ENCODE measurements at regions of chr1 and their contacts with region 1.

Region 1: DNA sequence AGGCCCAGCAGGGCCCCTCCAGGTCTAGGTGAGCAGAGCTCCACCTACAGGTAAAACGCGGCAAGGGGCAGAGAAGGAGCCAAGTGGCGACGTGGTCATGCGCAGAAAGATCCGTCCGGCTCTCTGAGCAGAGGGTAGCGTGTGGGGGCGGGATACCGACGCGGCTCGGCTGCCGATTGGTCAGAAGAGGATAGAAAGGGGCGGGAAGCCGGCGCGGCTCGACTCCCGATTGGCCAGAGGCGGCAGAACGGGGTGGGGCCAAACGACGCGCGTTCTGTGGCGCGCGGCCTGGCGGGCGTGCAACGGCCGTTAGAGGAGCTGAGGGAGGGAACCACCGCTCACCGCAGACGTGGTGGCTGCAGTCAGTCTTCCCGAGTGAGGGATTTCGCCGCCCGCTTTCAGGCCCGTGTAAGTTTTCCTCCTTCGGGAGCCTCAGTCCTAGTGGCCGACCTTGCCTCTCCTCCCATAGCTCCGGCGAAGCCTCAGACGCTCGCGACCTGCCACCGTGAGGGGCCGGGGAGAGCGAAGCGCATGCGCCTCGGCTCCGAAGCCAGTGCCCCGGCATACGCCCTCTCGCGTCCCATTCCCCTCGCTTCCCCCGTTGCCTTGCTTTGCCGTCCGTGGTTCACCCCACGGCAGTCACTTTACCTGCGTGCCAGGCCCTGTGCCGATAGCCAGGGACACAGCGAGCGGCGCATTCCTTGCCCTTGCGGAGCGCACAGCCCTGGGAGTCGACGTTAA is at the start of gene CEP85:
- DNase-seq: peak; percentile 98
- H3K4me3 Mint-ChIP-seq: peak within 1 kb of the TSS; percentile 100
- H3K27ac Mint-ChIP-seq: peak within 1 kb of the TSS; percentile 96
- H3K4me1 Mint-ChIP-seq: peaks cover 43% of the 10 kb centered on the region
- H3K27me3 Mint-ChIP-seq: peaks cover 4% of the 10 kb centered on the region
- total RNA-seq, gene CEP85: 37.0 and 37.1 TPM in 2 replicates

Region 2: GRCh38 chr1:26102526-26102925 is 131.5 kb before region 1 on chr1:
- intact Hi-C with region 1: loop called (anchors 1 kb)
- DNase-seq: no peak
- H3K4me3 Mint-ChIP-seq: no peak overlapping the region
- H3K27ac Mint-ChIP-seq: no peak overlapping the region
- H3K4me1 Mint-ChIP-seq: peaks cover 14% of the 10 kb centered on the region
- H3K27me3 Mint-ChIP-seq: peaks cover 9% of the 10 kb centered on the region

Region 3: GRCh38 chr1:26169669-26170471 is 64.2 kb before region 1 on chr1 and contains the start of gene ZNF593:
- intact Hi-C with region 1: loop called (anchors 1 kb)
- DNase-seq: peak; percentile 85
- H3K4me3 Mint-ChIP-seq: peak within 1 kb of the TSS; percentile 92
- H3K27ac Mint-ChIP-seq: peak within 1 kb of the TSS; percentile 88
- H3K4me1 Mint-ChIP-seq: peaks cover 29% of the 10 kb centered on the region
- H3K27me3 Mint-ChIP-seq: peaks cover 17% of the 10 kb centered on the region
- total RNA-seq, gene ZNF593: 81.3 and 83.0 TPM in 2 replicates

Region 4: GRCh38 chr1:26218906-26219494 is 15.1 kb before region 1 on chr1:
- intact Hi-C with region 1: no loop called
- DNase-seq: no peak
- H3K4me3 Mint-ChIP-seq: no peak overlapping the region
- H3K27ac Mint-ChIP-seq: no peak overlapping the region
- H3K4me1 Mint-ChIP-seq: no peaks in the 10 kb centered on the region
- H3K27me3 Mint-ChIP-seq: peaks cover 5% of the 10 kb centered on the region

Region 5: DNA sequence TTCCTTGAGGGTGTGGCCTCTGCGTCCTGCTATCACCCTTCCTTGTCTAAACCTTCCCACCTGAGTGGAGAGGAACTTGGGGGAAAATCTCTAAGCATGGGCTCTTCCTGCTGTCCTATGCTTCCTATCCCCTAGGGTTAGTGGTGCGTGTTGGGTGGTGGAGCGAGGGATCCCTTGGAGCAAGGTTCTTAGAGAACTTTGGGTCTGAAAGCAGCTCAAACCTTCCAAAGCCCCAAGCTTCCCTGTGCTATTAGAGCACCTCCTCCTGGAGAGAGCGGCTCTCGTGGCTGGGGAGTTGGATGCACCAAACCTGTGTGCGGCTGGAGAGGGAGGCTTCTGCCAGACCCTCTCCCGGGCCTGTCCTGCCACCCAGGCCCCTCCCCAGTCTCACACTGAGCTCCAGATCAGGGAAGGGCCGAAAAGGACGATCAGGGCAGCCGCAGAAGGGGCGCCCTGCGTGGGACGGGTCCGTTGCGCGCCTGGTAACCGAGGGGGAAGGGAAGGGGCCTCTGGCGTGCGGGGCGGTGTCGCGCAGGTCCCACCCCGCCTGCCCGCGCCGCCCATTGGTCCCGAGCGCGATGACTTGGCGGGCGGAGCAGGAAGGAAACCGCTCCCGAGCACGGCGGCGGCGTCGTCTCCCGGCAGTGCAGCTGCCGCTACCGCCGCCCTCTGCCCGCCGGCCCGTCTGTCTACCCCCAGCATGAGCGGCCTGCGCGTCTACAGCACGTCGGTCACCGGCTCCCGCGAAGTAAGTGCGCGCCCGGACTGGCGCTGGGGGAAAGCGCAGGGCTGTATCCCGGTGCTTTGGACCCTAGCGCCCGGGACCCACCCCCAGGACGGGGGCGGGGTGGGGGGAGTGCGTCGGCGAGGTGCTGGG is 45.6 kb after region 1 on chr1 and contains the start of gene SH3BGRL3:
- intact Hi-C with region 1: loop called (anchors 1 kb)
- DNase-seq: peak; percentile 85
- H3K4me3 Mint-ChIP-seq: peak within 1 kb of the TSS; percentile 92
- H3K27ac Mint-ChIP-seq: peak within 1 kb of the TSS; percentile 99
- H3K4me1 Mint-ChIP-seq: peaks cover 78% of the 10 kb centered on the region
- H3K27me3 Mint-ChIP-seq: no peaks in the 10 kb centered on the region
- total RNA-seq, gene SH3BGRL3: 551 and 575 TPM in 2 replicates

Region 6: DNA sequence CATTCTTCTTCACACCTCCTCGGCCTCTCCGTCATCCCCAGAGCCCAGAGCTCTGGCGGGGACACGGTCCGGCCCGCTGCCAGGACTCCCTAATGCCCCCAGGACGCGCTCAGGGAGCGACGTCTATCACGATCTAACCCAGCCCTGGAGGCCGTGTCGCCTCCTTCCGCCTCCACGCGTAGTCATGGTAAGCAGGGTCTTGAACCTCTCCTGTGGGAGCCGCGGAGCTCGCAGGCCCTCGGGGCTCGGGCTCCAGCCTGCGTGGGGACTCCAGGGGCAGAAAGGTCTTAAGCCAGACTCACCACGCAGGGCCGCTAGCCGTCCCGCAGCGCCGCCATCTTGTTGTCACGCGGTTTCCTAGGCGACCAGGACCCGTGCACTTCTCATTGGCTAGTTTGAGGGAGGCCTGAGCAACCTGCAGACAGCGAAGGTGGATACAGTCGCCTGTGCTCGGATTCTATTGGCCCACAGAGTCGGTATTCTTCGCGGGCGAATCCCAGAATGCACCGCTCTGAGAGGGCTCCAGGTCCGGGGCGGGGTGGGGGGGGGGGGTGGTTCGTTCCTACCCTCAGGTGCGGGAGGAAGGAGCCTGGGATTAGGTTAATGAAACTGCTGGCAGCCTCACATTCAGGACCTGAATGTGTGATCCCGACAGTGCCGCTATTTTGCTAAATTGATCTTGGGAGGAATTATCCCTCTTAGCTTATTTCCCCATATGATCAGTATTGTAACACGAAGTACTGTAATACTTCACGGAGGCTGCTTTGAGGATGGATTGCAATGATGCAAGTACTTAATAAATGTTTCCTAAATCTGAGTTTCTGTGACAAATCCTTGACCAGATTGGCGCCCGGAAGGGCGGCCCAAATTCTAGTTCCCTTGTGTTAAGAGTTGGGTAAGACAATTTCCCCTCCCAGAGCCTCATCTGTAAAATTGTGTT is 72.5 kb after region 1 on chr1 and contains the start of gene UBXN11:
- intact Hi-C with region 1: loop called (anchors 2 kb)
- DNase-seq: peak; percentile 92
- H3K4me3 Mint-ChIP-seq: peak within 1 kb of the TSS; percentile 99
- H3K27ac Mint-ChIP-seq: peak within 1 kb of the TSS; percentile 95
- H3K4me1 Mint-ChIP-seq: peaks cover 41% of the 10 kb centered on the region
- H3K27me3 Mint-ChIP-seq: no peaks in the 10 kb centered on the region
- total RNA-seq, gene UBXN11: 14.8 and 22.1 TPM in 2 replicates

Region 7: DNA sequence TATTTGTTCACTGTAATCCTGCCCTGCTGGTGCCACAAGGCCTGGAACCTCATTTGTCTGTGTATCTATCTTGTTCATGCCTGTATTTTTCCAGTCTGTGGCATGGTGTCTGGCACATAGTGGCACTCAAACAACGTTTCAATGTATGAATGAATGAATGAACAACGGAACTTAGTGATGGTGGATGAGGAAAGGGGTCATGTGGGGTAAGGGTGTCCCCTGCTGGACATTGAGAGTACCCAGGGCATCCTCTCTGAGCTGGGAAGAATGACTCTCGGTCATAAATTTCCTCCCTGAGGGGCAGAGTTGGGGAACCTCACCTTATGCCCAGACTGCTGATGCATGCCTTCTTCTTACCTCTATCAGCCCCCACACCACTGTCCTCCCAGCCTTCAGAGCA is 157.4 kb after region 1 on chr1:
- intact Hi-C with region 1: loop called (anchors 1 kb)
- DNase-seq: peak; percentile 36
- H3K4me3 Mint-ChIP-seq: no peak overlapping the region
- H3K27ac Mint-ChIP-seq: no peak overlapping the region
- H3K4me1 Mint-ChIP-seq: peaks cover 42% of the 10 kb centered on the region
- H3K27me3 Mint-ChIP-seq: peaks cover 3% of the 10 kb centered on the region

Region 8: GRCh38 chr1:26993237-26994019 is 759.4 kb after region 1 on chr1 and contains the start of gene TRNP1:
- intact Hi-C with region 1: loop called (anchors 5 kb)
- DNase-seq: peak; percentile 69
- H3K4me3 Mint-ChIP-seq: peak within 1 kb of the TSS; percentile 81
- H3K27ac Mint-ChIP-seq: peak within 1 kb of the TSS; percentile 21
- H3K4me1 Mint-ChIP-seq: peaks cover 21% of the 10 kb centered on the region
- H3K27me3 Mint-ChIP-seq: peaks cover 55% of the 10 kb centered on the region
- total RNA-seq, gene TRNP1: 2.0 TPM in 2 replicates